Activated CD4-positive, alpha-beta T cell treated with anti-CD3 and anti-CD28 coated beads for 36 hours (primary cell): ENCODE measurements at regions of chr14 and their contacts with region 1.

Region 1: DNA sequence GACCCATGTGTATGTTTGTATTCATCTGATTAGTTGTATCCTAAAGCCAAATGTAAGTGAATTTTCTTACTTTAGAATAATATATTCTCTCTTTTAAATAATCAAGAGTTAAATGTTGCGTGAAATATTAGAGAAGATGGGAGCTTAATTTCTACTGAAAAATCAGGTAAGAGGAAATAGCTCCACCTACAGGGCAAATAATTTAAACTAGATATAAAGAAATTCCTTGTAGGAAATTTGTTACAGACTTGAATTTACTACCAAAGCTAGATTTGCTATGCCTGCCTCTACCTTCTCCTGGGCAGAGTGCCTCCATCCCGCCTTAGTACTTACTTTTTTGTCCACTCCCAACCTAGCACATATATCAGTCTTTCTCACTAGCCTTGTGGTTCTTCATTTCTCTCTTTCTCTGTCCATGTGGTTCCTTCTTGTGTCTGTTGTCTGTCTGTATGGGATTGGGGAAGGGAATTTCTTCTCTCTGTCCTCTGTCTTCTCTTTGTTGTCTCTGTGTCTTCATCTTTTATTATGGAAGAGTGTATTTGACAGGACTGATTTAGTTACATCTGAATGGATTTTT is 44.7 kb downstream of the PALS1 start:
- DNase-seq: no peak
- ATAC-seq: no peak
- H3K4me3 Mint-ChIP-seq: no peak overlapping the region
- H3K27ac Mint-ChIP-seq: no peak overlapping the region
- H3K4me1 Mint-ChIP-seq: no peaks in the 10 kb centered on the region
- H3K27me3 Mint-ChIP-seq: no peaks in the 10 kb centered on the region

Region 2: DNA sequence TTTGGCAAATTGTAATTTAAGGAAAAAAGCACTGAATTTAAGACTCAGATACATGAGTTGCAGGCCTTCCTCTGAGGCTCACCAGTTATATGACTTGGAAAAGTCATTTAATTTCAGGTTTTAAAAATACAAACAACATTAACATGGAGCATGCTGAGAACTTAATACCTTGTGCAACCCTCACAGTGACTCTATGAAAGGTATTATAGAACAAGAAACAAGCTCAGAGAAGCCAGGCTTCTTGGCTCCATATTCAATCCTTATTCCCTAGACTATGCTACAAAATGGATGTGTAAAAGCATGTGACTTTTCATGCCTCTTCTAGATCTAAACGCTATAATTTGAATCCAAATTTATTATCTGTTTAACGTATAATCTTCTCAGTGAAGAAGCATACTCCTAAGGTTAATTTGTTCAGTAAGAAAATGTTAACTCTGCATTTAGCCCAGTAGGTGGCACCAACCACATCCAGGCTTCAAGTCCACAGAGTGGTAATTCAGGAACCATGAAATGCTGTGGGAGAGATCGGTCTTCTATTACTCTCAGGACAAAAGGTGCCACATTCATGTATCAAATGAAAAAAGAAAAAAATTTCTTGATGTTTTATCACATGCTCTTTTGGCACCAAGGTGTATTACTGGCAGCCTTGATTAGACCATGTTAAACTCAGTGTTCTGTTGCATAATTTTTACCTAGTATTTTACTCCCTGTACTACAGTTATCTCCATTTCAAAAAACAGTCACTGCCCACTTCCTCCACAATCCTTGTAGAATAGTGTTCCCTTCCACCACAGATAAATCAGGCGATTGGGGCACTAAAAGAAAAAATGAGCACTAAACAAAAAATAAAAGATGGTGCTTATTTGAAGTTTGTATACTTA is 790.5 kb before region 1 on chr14:
- CTCF ChIA-PET with region 1: no interaction called
- POLR2A ChIA-PET with region 1: no interaction called
- intact Hi-C with region 1: loop called in 1 of 2 experiments (anchors 5 kb)
- DNase-seq: peak; percentile 52
- ATAC-seq: peak; percentile 83
- H3K4me3 Mint-ChIP-seq: no peak overlapping the region
- H3K27ac Mint-ChIP-seq: no peak overlapping the region
- H3K4me1 Mint-ChIP-seq: peaks cover 19% of the 10 kb centered on the region
- H3K27me3 Mint-ChIP-seq: no peaks in the 10 kb centered on the region

Region 3: DNA sequence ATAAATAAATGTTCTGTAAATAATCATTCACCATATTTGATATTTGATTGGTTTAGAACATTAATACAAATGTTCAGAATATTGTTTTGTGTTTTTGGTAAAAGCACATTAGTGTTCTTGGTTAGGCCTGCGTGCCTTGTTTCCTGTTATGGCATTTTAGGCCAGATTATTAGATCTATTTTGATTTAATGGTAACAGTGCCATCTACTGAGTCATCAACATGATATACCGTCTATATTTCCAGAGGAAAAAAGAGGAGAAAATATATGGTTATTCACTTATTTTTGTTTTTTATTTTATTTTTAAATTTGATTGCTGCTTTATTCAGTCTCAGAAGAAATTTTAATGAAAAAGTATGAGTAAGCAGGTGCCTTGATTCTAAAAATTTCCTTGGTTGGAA is 717.7 kb before region 1 on chr14:
- CTCF ChIA-PET with region 1: no interaction called
- POLR2A ChIA-PET with region 1: no interaction called
- intact Hi-C with region 1: no loop called
- DNase-seq: no peak
- ATAC-seq: no peak
- H3K4me3 Mint-ChIP-seq: no peak overlapping the region
- H3K27ac Mint-ChIP-seq: no peak overlapping the region
- H3K4me1 Mint-ChIP-seq: peaks cover 19% of the 10 kb centered on the region
- H3K27me3 Mint-ChIP-seq: no peaks in the 10 kb centered on the region

Region 4: GRCh38 chr14:66624299-66624937 is 661.5 kb before region 1 on chr14:
- CTCF ChIA-PET with region 1: interaction called, 8 read pairs
- POLR2A ChIA-PET with region 1: no interaction called
- intact Hi-C with region 1: loop called in 1 of 2 experiments (anchors 5 kb)
- DNase-seq: peak; percentile 61
- ATAC-seq: peak; percentile 72
- H3K4me3 Mint-ChIP-seq: no peak overlapping the region
- H3K27ac Mint-ChIP-seq: no peak overlapping the region
- H3K4me1 Mint-ChIP-seq: no peaks in the 10 kb centered on the region
- H3K27me3 Mint-ChIP-seq: no peaks in the 10 kb centered on the region

Region 5: GRCh38 chr14:67166450-67166853 is 119.5 kb before region 1 on chr14:
- CTCF ChIA-PET with region 1: interaction called, 42 read pairs
- POLR2A ChIA-PET with region 1: no interaction called
- intact Hi-C with region 1: loop called (anchors 1 kb)
- DNase-seq: peak; percentile 58
- ATAC-seq: no peak
- H3K4me3 Mint-ChIP-seq: no peak overlapping the region
- H3K27ac Mint-ChIP-seq: no peak overlapping the region
- H3K4me1 Mint-ChIP-seq: no peaks in the 10 kb centered on the region
- H3K27me3 Mint-ChIP-seq: no peaks in the 10 kb centered on the region

Region 6: GRCh38 chr14:67187210-67187609 is 98.8 kb before region 1 on chr14:
- CTCF ChIA-PET with region 1: interaction called, 11 read pairs
- POLR2A ChIA-PET with region 1: no interaction called
- intact Hi-C with region 1: no loop called
- DNase-seq: no peak
- ATAC-seq: no peak
- H3K4me3 Mint-ChIP-seq: no peak overlapping the region
- H3K27ac Mint-ChIP-seq: no peak overlapping the region
- H3K4me1 Mint-ChIP-seq: peaks cover 20% of the 10 kb centered on the region
- H3K27me3 Mint-ChIP-seq: no peaks in the 10 kb centered on the region

Region 7: GRCh38 chr14:67426983-67427606 is 141.1 kb after region 1 on chr14:
- CTCF ChIA-PET with region 1: no interaction called
- POLR2A ChIA-PET with region 1: no interaction called
- intact Hi-C with region 1: no loop called
- DNase-seq: peak; percentile 85
- ATAC-seq: peak; percentile 98
- H3K4me3 Mint-ChIP-seq: no peak overlapping the region
- H3K27ac Mint-ChIP-seq: no peak overlapping the region
- H3K4me1 Mint-ChIP-seq: no peaks in the 10 kb centered on the region
- H3K27me3 Mint-ChIP-seq: peaks cover 19% of the 10 kb centered on the region